Activated naive CD8-positive, alpha-beta T cell treated with anti-CD3 and anti-CD28 coated beads, Interleukin-2, amount 10 ng/mL, durations not matched to agents 7 days and 5 days (primary cell): ENCODE measurements at regions of chr3 and their contacts with region 1.

Region 1: DNA sequence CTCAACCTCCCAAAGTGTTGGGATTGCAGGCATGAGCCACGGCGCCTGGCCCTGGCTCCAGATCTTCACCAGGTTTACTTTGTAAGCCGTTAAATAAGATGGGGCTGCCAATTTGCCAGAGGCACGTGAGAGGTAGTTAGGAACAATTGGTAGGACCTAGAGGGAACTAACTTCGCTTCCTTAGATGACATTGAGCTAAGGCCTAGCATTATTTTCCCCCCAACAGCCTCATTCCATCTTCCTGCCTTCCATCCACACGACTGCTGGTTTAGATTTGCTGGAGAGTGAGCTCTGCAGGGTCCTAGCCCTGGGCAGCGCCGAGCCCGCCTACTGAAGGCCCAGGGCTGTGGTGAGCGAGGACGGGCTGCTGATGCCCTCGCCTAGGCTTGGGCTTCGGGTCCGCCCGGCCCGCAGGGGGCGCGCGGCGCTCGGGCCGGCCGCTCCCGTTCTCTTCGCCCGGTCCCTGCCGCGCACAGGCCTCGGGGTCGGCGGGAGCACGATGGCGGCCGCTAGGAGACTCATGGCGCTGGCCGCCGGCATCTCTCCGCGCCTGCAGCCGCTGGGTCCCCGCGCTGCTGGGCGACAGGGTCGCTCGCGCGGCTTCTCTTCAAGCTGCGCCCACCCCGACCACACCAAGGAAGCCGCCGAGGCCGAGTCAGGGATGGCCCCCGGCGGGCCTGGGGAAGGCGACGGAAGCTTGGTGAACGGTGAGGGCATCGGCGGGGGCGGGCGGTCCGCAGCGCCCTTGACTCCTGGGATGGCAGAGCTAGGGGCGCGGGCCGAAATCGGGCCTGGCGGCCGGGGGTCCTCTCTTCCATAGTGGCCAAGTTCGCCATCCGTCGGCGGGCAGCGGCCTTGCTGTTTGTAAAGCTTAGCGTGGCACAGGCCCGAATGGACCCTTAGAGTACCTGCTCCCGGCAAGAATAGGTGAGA is 21.9 kb downstream of the DHX30 start:
- DNase-seq: peak; percentile 89
- ATAC-seq: peak; percentile 99
- H3K4me3 Mint-ChIP-seq: peak overlapping the region; percentile 90
- H3K27ac Mint-ChIP-seq: peak overlapping the region; percentile 85
- H3K4me1 Mint-ChIP-seq: peaks cover 26% of the 10 kb centered on the region
- H3K27me3 Mint-ChIP-seq: no peaks in the 10 kb centered on the region

Region 2: DNA sequence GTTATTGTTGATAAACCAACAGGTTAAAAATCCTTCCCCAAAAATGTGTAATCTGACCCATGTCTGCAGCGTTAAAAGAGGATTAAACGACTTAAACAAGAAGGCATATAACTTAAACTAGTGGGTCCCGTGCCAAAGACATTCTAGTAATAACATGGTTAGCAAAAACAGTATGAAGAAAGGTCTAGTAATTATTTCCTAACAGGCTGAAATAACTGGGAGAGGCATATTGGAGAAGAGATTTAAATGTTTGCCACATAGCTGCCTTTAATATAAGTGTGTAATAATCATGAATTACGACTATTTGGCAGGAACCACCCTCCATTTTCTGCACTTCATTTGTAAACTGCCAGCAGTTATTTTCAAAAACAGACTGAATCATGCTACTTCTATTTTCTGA is 178.4 kb before region 1 on chr3:
- POLR2A ChIA-PET with region 1: no interaction called
- DNase-seq: no peak
- ATAC-seq: no peak
- H3K4me3 Mint-ChIP-seq: no peak overlapping the region
- H3K27ac Mint-ChIP-seq: no peak overlapping the region
- H3K4me1 Mint-ChIP-seq: peaks cover 2% of the 10 kb centered on the region
- H3K27me3 Mint-ChIP-seq: no peaks in the 10 kb centered on the region

Region 3: DNA sequence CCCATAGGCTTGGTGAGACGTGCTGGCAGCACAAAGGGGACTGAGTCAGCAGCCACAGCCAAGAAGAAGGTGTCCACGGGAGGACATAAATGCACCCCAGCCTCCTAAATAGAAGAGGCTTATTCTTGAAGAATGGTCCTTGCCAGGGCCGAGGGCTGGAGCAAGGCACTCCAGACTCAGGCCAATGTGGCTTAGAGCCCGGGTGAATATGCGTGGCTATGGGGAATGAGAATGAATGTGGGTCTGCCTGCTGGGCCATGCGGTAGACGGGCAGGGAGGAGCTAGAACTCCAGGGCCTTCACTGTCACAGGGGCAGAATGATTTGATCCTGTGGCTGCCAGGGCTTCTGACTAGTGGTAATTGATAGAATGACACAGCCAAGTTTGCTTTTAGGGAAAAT is 12.2 kb after region 1 on chr3:
- POLR2A ChIA-PET with region 1: interaction called, 12 read pairs
- DNase-seq: no peak
- ATAC-seq: no peak
- H3K4me3 Mint-ChIP-seq: no peak overlapping the region
- H3K27ac Mint-ChIP-seq: no peak overlapping the region
- H3K4me1 Mint-ChIP-seq: no peaks in the 10 kb centered on the region
- H3K27me3 Mint-ChIP-seq: no peaks in the 10 kb centered on the region